Activated T-helper 1 cell treated with anti-CD3 and anti-CD28 coated beads, Interleukin-12 subunit alpha, Interleukin-12 subunit beta, Interleukin-2, Interleukin-4 antibody, amounts not matched to agents 30 ng/mL and 10 ng/mL and 1 ng/mL, durations not matched to agents 14 hours and 24 hours and 36 hours (primary cell): ENCODE measurements at regions of chr3 and their contacts with region 1.

Region 1: DNA sequence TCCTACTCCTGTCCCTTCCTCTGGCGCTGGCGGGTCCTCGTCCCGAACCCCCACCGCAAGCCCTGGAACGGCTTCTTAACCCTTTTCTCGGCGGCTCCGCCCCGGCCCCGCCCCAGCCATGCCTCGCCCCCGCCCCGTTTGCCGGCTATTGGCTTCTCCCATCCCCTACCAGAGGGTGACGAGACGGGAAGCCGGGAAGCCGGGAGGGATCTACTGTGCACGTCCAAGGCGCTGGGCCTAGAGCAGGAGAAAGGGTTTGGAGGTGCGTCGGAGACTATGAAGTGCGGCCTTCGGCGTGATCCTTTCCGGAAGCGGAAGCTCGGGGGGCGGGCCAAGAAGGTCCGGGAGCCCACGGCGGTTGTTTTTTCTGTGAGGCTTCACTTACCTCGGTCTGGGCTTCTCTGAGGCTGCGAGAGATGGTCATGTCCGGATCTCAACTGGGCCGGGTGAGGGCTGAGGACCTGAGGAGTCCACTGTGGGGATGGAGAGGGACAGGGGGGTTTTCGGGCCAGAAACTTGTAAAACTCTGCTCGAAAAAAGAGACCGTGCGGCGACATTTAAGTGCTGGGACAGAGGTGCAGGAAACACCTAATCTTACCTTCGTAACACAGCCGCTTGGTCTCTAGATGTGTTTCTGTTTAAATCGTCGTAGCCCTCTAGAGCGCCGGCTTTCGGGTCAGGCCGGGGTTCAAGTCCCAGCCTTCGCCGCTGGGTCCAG is 21.4 kb downstream of the ROPN1B start:
- DNase-seq: peak; percentile 68
- H3K4me3 Mint-ChIP-seq: peak overlapping the region; percentile 90
- H3K27ac Mint-ChIP-seq: peak overlapping the region; percentile 88
- H3K4me1 Mint-ChIP-seq: peaks cover 16% of the 10 kb centered on the region
- H3K27me3 Mint-ChIP-seq: peaks cover 15% of the 10 kb centered on the region

Region 2: GRCh38 chr3:125967138-125967537 is 23.3 kb before region 1 on chr3:
- intact Hi-C with region 1: loop called (anchors 1 kb)
- DNase-seq: no peak
- H3K4me3 Mint-ChIP-seq: no peak overlapping the region
- H3K27ac Mint-ChIP-seq: no peak overlapping the region
- H3K4me1 Mint-ChIP-seq: peaks cover 3% of the 10 kb centered on the region
- H3K27me3 Mint-ChIP-seq: peaks cover 23% of the 10 kb centered on the region

Region 3: DNA sequence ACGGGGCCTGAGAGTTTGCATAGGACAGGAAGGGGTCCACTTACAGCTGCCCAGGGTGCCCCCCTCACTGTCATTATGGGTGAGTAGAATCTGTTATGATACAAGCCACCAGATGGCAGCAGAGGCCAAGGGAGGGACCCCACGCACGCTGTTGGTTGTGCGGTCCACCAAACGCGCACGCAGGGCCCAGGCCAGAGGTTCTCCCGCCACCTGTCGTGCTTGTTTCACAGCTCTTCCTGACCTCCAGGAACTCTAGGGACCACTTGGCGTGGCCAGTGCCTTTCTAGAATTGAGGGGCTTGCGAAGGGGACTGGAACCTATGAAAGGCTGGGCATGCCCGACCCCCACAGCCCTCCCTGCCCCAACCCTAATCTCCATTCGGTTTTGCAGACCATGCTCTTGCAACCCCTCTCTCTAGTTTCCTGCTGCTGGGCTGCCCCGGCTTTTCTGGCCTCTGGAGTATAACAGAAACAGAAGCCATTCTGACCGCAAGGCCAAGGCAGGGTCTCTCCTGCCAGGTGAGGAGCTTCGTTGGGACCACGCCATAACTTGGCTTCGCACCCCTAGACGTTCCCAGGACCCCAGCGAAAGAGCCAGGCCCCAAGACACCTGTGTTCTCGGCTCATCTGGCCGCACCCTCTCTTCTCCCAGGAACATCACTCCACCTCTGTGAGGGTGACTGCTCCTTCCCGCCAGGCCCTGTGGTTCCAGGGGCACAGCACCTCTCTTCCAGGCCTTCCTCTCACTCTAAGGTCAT is 144.0 kb after region 1 on chr3:
- intact Hi-C with region 1: no loop called
- DNase-seq: peak; percentile 5
- H3K4me3 Mint-ChIP-seq: no peak overlapping the region
- H3K27ac Mint-ChIP-seq: no peak overlapping the region
- H3K4me1 Mint-ChIP-seq: no peaks in the 10 kb centered on the region
- H3K27me3 Mint-ChIP-seq: peaks cover 5% of the 10 kb centered on the region

Region 4: GRCh38 chr3:126357295-126358037 is 367.1 kb after region 1 on chr3 and contains the start of gene KLF15:
- intact Hi-C with region 1: loop called (anchors 2 kb)
- DNase-seq: peak; percentile 73
- H3K4me3 Mint-ChIP-seq: peak within 1 kb of the TSS; percentile 84
- H3K27ac Mint-ChIP-seq: peak within 1 kb of the TSS; percentile 48
- H3K4me1 Mint-ChIP-seq: peaks cover 8% of the 10 kb centered on the region
- H3K27me3 Mint-ChIP-seq: peaks cover 46% of the 10 kb centered on the region
- total RNA-seq, gene KLF15: 0.08 and 0.22 TPM in 2 replicates